ENCODE measurements at regions of chr3 and their contacts with region 1.

Region 1: DNA sequence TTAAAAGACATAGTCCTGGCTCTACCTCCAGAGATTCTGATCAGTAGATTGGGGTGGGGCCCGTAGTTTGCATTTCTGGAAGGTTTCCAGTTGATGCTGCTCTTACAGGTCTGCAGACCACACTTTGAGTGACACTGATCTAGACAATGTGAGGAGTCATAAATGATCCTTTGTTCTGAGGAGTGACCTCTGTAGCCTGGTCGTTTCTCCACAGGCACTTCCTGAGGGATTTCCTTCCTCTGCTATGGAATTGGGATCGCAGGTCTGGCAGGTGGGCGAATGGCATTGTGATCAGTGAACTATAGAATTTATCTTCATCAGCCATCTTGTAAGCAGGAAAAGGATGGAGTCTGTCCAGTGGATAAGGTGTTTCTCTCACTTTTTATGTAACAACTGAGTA is 5.5 kb downstream of the GFM1 start:
- DNase-seq: no peak
- ATAC-seq: no peak
- H3K4me3 Mint-ChIP-seq: no peak overlapping the region
- H3K27ac Mint-ChIP-seq: peak overlapping the region; percentile 28
- H3K4me1 Mint-ChIP-seq: peaks cover 30% of the 10 kb centered on the region
- H3K27me3 Mint-ChIP-seq: no peaks in the 10 kb centered on the region

Region 2: DNA sequence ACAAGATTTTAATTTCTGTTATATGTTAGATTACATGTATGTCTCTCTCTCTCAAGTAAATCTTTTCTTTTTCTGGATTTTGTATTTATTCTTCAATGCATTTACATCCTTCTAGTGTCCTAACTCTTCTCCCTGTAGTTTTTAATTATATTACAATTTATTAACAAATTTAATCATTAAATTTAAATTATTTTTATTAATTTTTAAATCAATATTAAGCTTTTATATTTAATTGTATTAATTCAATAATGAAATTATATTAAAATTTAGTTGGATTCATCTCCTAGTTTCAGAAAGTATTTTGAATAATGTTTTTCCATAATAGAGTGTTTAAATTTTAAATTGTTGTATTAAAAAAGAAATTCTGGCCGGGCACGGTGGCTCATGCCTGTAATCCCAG is 49.0 kb before region 1 on chr3:
- CTCF ChIA-PET with region 1: no interaction called
- POLR2A ChIA-PET with region 1: no interaction called
- intact Hi-C with region 1: no loop called
- DNase-seq: no peak
- ATAC-seq: no peak
- H3K4me3 Mint-ChIP-seq: no peak overlapping the region
- H3K27ac Mint-ChIP-seq: no peak overlapping the region
- H3K4me1 Mint-ChIP-seq: no peaks in the 10 kb centered on the region
- H3K27me3 Mint-ChIP-seq: peaks cover 2% of the 10 kb centered on the region

Region 3: DNA sequence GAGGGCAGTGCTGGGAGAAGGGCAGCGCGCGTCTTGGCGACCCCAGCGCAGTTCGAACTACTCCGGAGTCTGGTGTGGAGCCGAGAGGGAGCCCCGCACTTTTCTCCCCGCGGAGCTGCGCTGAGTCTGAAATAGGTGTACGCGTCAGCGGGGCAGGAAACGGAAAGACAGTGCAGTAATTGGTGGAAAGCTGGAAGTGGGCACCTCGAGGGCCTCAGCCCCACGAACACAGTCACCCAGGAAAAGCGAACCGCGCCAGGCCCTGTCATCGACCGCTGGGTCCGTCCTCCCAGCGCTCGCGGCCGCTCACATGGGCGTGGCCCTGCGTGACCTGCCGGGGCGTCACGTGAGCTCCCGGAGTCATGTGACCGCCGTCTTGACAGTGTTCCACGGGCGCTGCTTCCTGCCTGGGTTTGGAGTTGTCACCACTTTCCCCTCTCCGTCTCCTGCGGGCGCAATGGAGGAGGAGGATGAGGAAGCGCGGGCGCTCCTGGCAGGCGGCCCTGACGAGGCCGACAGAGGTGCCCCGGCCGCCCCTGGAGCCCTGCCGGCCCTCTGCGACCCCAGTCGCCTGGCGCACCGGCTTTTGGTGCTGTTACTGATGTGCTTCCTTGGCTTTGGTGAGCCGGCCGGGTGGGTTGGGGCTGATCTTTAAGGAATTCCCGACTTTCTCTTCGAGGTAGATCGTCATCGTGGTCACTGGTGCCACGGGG is 152.1 kb after region 1 on chr3 and contains the start of gene MFSD1:
- CTCF ChIA-PET with region 1: interaction called, 12 read pairs
- POLR2A ChIA-PET with region 1: no interaction called
- intact Hi-C with region 1: loop called in 1 of 2 experiments (anchors 5 kb)
- DNase-seq: peak; percentile 94
- ATAC-seq: peak; percentile 92
- H3K4me3 Mint-ChIP-seq: peak within 1 kb of the TSS; percentile 81
- H3K27ac Mint-ChIP-seq: peak within 1 kb of the TSS; percentile 87
- H3K4me1 Mint-ChIP-seq: peaks cover 22% of the 10 kb centered on the region
- H3K27me3 Mint-ChIP-seq: no peaks in the 10 kb centered on the region
- total RNA-seq, gene MFSD1: 6.9 to 13.1 TPM